H1 (cell line): ENCODE measurements at regions of chr11 and their contacts with region 1.

Region 1: DNA sequence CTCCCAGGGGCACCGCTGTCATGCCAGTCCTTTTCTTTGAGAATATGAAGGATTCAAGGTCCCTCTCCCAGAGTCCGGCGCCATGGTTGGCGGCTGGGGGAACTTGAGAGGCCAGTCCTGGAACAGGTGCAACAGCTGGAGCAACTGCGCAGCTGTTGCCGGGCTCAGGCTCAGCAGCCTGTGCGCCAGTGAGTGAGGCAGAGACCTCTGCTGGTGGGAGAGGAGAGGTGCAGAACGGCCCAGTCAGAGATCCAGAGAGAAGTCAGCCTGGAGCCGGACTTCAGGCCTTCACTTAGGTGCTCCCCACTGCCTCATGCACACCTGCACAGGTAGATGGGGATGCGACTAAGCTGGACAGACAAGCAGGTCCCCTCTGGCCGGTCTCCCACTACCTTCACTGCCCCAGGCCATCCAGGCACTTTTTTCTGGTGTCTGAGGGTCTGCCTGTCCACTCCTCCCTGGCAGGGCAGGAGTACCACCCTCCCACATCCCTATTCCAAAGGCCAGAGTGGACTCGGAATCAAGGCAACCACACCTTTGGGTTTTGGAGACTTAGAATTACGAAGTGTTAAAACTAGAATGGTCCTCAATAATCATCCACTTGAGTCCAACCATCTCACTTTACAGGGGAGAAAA is 4.6 kb downstream of the CHRDL2 start:
- DNase-seq: peak; percentile 47 to 80
- H3K4me3 ChIP-seq: no peak overlapping the region
- H3K27ac ChIP-seq: no peak overlapping the region
- H3K4me1 ChIP-seq: peaks cover 0 to 8% (median 0%) of the 10 kb centered on the region in 4 experiments; a peak in 3 of 7 replicates
- H3K27me3 ChIP-seq: peaks cover 22 to 37% (median 31%) of the 10 kb centered on the region in 4 experiments
- CTCF ChIP-seq: peak; percentile 95 to 98 (median 97)
- EP300 ChIP-seq: no peak
- POLR2A ChIP-seq: no peak
- RAD21 ChIP-seq: peak; percentile 83 to 92

Region 2: GRCh38 chr11:74418509-74418895 is 308.2 kb before region 1 on chr11:
- CTCF ChIA-PET with region 1: no interaction called
- POLR2A ChIA-PET with region 1: no interaction called
- DNase-seq: no peak
- H3K4me3 ChIP-seq: no peak overlapping the region
- H3K27ac ChIP-seq: no peak overlapping the region
- H3K4me1 ChIP-seq: no peaks in the 10 kb centered on the region; a peak in 1 of 7 replicates
- H3K27me3 ChIP-seq: peaks cover 0 to 1% (median 0%) of the 10 kb centered on the region in 4 experiments; a peak in 1 of 7 replicates
- CTCF ChIP-seq: no peak
- EP300 ChIP-seq: no peak
- POLR2A ChIP-seq: no peak
- RAD21 ChIP-seq: no peak

Region 3: DNA sequence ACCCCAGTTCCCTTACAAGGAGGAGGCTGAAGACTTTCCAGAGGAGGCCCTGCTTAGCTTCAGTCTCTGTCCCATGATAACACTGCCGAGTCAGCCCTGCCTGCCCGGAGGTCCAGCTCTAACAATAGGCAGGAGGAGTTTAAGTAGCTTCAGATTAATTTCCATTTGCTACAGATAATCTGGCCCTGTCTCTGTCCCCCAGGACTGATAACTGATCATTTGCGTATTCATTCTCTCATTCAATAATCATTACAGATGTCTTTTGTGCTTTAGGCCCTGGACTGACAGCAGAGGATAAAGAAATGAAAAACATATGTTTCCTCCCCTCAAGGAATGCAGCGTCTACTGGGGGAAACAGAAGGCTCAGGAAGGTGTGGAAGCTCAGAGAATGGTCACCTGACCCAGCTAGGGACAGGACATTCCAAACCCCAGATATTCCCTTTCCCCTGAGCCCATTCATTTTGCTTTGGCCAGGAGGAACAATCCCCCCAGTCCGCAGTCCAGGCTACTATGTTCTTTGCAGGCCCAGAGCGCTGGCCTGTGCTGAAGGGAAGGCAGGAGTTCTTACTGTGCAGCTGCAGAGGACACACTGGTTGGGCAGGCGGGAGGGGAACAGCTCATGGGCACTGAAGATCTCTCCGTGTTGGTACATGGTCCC is 16.3 kb before region 1 on chr11:
- CTCF ChIA-PET with region 1: interaction called, 348 read pairs
- POLR2A ChIA-PET with region 1: no interaction called
- DNase-seq: no peak
- H3K4me3 ChIP-seq: no peak overlapping the region
- H3K27ac ChIP-seq: no peak overlapping the region
- H3K4me1 ChIP-seq: peaks cover 0 to 6% (median 3%) of the 10 kb centered on the region in 4 experiments; a peak in 3 of 7 replicates
- H3K27me3 ChIP-seq: no peaks in the 10 kb centered on the region
- CTCF ChIP-seq: no peak
- EP300 ChIP-seq: no peak
- POLR2A ChIP-seq: no peak
- RAD21 ChIP-seq: no peak

Region 4: GRCh38 chr11:74739546-74740270 is 13.0 kb after region 1 on chr11:
- CTCF ChIA-PET with region 1: interaction called, 72 read pairs
- POLR2A ChIA-PET with region 1: no interaction called
- DNase-seq: peak in 1 of 2 experiments; percentile 46
- H3K4me3 ChIP-seq: no peak overlapping the region
- H3K27ac ChIP-seq: no peak overlapping the region
- H3K4me1 ChIP-seq: no peaks in the 10 kb centered on the region
- H3K27me3 ChIP-seq: no peaks in the 10 kb centered on the region; a peak in 1 of 7 replicates
- CTCF ChIP-seq: peak; percentile 80 to 88 (median 86)
- EP300 ChIP-seq: no peak
- POLR2A ChIP-seq: no peak
- RAD21 ChIP-seq: peak; percentile 67 to 83

Region 5: GRCh38 chr11:74748211-74749127 is 21.8 kb after region 1 on chr11 and contains the start of gene RNF169:
- CTCF ChIA-PET with region 1: interaction called, 72 read pairs
- POLR2A ChIA-PET with region 1: interaction called, 3 read pairs
- DNase-seq: peak; percentile 84 to 86
- H3K4me3 ChIP-seq: peak within 1 kb of the TSS; percentile 50 to 77 (median 59)
- H3K27ac ChIP-seq: peak within 1 kb of the TSS; percentile 83
- H3K4me1 ChIP-seq: peaks cover 3 to 6% (median 4%) of the 10 kb centered on the region in 4 experiments; a peak in 5 of 7 replicates
- H3K27me3 ChIP-seq: peaks cover 0 to 2% (median 0%) of the 10 kb centered on the region in 4 experiments; a peak in 1 of 7 replicates
- CTCF ChIP-seq: no peak
- EP300 ChIP-seq: no peak
- POLR2A ChIP-seq: peak; percentile 63 to 67
- RAD21 ChIP-seq: no peak
- total RNA-seq, gene RNF169: 12.1 and 12.5 TPM in 2 replicates

Region 6: GRCh38 chr11:74860743-74861142 is 134.1 kb after region 1 on chr11:
- CTCF ChIA-PET with region 1: no interaction called
- POLR2A ChIA-PET with region 1: no interaction called
- DNase-seq: no peak
- H3K4me3 ChIP-seq: no peak overlapping the region
- H3K27ac ChIP-seq: no peak overlapping the region
- H3K4me1 ChIP-seq: no peaks in the 10 kb centered on the region
- H3K27me3 ChIP-seq: no peaks in the 10 kb centered on the region
- CTCF ChIP-seq: no peak
- EP300 ChIP-seq: no peak
- POLR2A ChIP-seq: no peak
- RAD21 ChIP-seq: no peak